ENCODE measurements at regions of chr7 and their contacts with region 1.

Region 1: GRCh38 chr7:98106647-98107445 is at the start of gene LMTK2:
- DNase-seq: peak; percentile 82
- H3K4me3 ChIP-seq: peak within 1 kb of the TSS; percentile 91 to 95 (median 94)
- H3K27ac ChIP-seq: peak within 1 kb of the TSS; percentile 59
- H3K4me1 ChIP-seq: peaks cover 12% of the 10 kb centered on the region
- H3K27me3 ChIP-seq: no peaks in the 10 kb centered on the region
- CTCF ChIP-seq: peak; percentile 77 to 94
- total RNA-seq, gene LMTK2: 15.3 to 18.9 TPM

Region 2: DNA sequence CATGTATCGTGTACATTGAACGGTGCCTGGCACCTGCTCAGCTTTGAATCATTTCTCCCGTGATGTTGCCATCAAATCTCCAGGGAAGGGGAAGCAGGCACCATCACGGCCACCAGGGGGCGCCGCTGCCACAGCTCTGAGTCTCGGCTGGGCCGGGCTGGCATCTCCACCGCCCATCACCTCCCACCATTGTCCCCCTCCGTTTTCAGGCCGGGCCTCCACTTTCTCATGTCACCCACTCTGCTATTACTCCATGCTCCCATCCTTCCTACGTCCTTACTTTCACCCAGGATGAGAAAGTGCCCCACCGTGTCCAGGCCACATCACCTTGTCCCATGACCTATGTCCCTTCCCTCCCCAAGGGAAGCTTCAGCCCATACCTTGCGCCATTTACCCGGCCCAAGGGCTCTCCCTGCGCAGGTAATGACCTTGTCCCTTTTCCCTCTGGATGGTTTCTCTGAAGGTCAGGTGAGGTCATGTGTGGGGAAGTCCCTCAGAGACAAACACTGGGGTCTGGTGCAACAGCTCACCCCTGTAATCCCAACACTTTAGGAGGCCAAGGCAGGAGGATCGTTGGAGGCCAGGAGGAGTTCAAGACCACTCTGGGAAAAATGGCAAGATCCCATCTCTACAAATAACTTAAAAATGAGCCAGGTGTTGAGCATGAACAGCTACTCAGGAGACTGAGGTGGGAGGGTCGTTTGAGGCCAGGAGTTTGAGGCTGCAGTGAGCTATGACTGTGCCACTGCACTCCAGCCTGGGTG is 85.1 kb before region 1 on chr7:
- CTCF ChIA-PET with region 1: interaction called, 4 read pairs
- dilution Hi-C with region 1: no loop called
- in situ Hi-C with region 1: no loop called
- intact Hi-C with region 1: loop called (anchors 1 kb)
- DNase-seq: peak; percentile 49
- H3K4me3 ChIP-seq: no peak overlapping the region
- H3K27ac ChIP-seq: no peak overlapping the region
- H3K4me1 ChIP-seq: no peaks in the 10 kb centered on the region
- H3K27me3 ChIP-seq: no peaks in the 10 kb centered on the region
- CTCF ChIP-seq: peak; percentile 84 to 97

Region 3: GRCh38 chr7:98091061-98091460 is 15.8 kb before region 1 on chr7:
- CTCF ChIA-PET with region 1: no interaction called
- dilution Hi-C with region 1: no loop called
- in situ Hi-C with region 1: no loop called
- intact Hi-C with region 1: loop called (anchors 1 kb)
- DNase-seq: peak; percentile 78
- H3K4me3 ChIP-seq: no peak overlapping the region
- H3K27ac ChIP-seq: no peak overlapping the region
- H3K4me1 ChIP-seq: peaks cover 10% of the 10 kb centered on the region
- H3K27me3 ChIP-seq: no peaks in the 10 kb centered on the region
- CTCF ChIP-seq: no peak

Region 4: DNA sequence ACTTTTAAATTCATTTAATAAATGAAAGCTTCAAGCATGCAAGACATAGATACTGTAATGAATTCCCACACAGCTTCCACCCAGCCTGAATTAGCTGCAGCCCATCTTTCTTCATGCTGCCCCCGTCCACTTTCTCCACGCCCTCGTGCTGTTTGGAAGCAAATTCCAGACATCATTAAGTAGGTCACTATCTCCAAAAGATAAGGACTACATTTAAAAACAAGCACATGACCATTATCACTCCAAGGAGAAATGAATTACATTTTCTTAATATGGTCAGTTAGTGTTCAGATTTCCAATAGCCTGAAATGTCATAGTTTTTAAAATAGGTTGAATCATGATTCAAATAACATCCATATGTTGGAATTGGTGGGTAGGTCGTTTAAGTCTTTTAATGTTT is 24.1 kb after region 1 on chr7:
- CTCF ChIA-PET with region 1: no interaction called
- dilution Hi-C with region 1: no loop called
- in situ Hi-C with region 1: no loop called
- intact Hi-C with region 1: loop called (anchors 2 kb)
- DNase-seq: no peak
- H3K4me3 ChIP-seq: no peak overlapping the region
- H3K27ac ChIP-seq: peak overlapping the region; percentile 42
- H3K4me1 ChIP-seq: peaks cover 30% of the 10 kb centered on the region
- H3K27me3 ChIP-seq: no peaks in the 10 kb centered on the region
- CTCF ChIP-seq: no peak

Region 5: DNA sequence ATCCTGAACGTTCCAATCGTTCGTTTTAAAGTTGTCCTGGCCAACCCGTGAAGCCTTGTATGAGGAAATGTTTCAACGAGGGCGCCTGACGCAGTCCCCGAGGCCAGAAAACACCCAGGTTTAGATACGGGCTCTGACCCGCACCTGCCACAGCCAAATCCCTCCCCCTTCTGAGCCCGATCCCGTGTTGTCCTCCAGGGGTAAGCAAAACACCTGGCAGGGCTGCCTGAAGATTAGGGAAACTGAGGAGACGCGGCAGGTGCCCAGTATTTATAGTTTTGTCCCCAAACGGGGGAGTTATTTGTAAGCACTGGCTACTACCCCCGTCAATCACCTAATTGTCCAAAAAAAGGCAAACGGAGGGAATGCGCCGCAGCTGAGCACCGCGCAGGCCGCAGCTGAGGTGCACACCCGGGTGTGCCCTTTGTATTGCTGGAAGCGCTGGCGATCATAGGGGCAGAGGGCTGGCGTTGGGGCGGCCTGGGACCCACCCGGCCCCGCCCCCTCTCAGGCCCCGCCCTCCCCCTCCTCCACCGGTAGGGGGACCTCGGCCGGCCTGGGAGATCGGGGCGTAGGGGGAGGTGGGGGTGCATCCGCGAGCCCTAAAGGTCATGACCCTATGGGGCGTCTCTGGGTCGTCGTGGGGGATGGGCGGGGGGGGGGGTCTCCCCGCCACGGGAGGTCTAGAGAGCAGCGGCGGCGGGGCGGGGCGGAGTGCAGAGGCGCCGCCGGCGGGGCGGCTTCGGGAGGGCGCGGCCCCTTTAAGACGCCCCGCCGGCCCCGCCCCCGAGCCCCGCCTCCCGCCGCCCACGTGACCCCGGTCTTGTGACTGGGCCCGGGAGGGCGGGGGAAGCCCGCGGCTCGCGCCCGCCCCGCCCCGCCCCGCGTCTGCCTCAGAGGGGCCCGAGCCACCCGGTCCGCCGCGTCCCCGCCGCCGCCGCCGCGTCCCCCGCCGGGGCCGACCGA is 174.2 kb after region 1 on chr7 and contains the start of gene BRI3:
- CTCF ChIA-PET with region 1: no interaction called
- dilution Hi-C with region 1: no loop called
- in situ Hi-C with region 1: no loop called
- intact Hi-C with region 1: loop called (anchors 10 kb)
- DNase-seq: peak; percentile 78
- H3K4me3 ChIP-seq: peak within 1 kb of the TSS; percentile 68 to 81 (median 77)
- H3K27ac ChIP-seq: peak within 1 kb of the TSS; percentile 67
- H3K4me1 ChIP-seq: peaks cover 45% of the 10 kb centered on the region
- H3K27me3 ChIP-seq: no peaks in the 10 kb centered on the region
- CTCF ChIP-seq: no peak
- total RNA-seq, gene BRI3: 24.5 to 158 TPM

Region 6: DNA sequence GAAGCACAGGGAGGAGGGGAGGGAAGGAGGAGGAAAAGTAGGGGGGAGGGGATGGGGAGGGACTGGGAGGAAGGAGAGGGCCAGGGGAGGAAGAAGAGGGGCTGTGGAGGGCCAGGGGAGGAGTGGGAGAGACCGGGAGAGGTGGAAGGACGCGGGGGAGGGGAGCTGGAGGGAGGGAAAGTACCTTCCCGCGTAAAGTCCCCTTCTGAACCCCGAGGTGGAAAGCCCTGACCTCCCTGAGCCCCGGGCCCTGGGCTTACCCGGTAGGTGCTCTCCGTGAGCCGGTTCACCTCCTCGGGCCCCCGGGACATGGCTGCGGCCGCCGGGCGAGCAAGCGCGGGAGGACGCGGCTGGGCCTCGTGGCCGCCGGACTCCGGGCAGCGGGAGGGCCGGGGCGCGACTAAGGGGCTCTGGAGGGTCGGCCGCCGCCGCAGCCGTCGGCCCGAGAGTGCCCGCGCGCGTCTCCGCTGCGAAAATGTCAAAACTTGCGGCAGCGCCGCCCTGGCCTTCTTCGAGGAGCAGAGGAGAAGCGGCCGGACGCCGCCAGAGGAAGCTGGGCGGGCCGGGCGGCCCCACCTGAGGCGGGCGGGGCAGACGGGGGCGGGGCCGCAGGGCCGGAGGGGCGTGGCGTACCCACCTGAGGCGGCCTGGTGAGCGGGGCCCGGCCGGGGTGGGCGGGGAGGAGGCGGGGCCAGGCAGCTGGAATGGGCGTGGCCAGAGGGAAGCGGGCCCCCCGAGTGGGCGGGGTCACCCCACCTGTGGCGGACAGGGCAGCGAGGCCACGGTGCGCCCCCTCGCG is 293.9 kb after region 1 on chr7 and contains the start of gene BAIAP2L1:
- CTCF ChIA-PET with region 1: no interaction called
- dilution Hi-C with region 1: no loop called
- in situ Hi-C with region 1: no loop called
- intact Hi-C with region 1: loop called (anchors 2 kb)
- DNase-seq: peak; percentile 92
- H3K4me3 ChIP-seq: peak within 1 kb of the TSS; percentile 80 to 96 (median 88)
- H3K27ac ChIP-seq: peak within 1 kb of the TSS; percentile 95
- H3K4me1 ChIP-seq: peaks cover 14% of the 10 kb centered on the region
- H3K27me3 ChIP-seq: no peaks in the 10 kb centered on the region
- CTCF ChIP-seq: no peak
- total RNA-seq, gene BAIAP2L1: 39.0 to 65.0 TPM

Measured in mammary epithelial cell (primary cell).